ENCODE measurements at regions of chr7 and their contacts with region 1.

Region 1: DNA sequence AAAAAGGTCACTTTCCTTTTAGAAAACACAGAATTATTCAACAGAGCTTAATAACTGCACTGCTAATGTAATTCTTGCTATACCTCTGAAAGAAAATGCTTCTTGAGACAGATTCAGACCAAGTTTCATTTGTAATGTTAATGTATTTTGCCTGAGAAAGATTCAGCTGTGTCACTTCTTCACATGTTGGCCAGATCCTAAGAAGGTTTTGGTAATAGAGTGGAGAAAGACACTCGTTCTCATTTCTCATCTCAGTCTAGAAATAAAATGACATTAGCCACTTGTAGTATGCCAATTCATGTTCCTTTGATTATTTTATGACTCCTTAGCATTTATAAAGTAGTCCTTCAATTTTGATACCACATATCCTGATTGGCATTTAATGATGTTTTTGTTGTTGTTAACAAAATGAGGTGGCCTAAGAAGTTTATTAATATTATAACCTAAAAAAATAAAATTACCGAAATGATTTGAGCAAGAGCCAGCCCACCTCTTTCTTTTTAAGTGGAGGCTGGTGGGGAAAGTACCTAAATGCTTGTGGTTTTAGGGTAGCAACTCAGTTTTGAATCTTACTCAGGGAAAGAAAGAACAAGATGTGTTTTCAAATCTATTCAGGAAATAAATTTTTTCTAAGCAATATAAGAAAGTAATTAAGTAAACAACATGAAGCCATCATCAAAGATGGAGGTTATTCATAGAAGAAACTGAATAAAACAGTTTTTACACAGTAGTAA is 16.4 kb upstream of the ELAPOR2 start:
- DNase-seq: no peak
- H3K4me3 ChIP-seq: no peak overlapping the region
- H3K27ac ChIP-seq: no peak overlapping the region
- H3K4me1 ChIP-seq: no peaks in the 10 kb centered on the region
- H3K27me3 ChIP-seq: no peaks in the 10 kb centered on the region
- CTCF ChIP-seq: no peak
- EP300 ChIP-seq: no peak
- POLR2A ChIP-seq: no peak

Region 2: GRCh38 chr7:87148332-87148955 is 72.6 kb after region 1 on chr7:
- in situ Hi-C with region 1: no loop called
- intact Hi-C with region 1: loop called (anchors 10 kb)
- DNase-seq: no peak
- H3K4me3 ChIP-seq: no peak overlapping the region
- H3K27ac ChIP-seq: no peak overlapping the region
- H3K4me1 ChIP-seq: peaks cover 0 to 22% (median under 1%) of the 10 kb centered on the region in 4 donors
- H3K27me3 ChIP-seq: no peaks in the 10 kb centered on the region
- CTCF ChIP-seq: peak; percentile 39 to 53 (median 45)
- EP300 ChIP-seq: no peak
- POLR2A ChIP-seq: no peak

Measured in transverse colon (tissue), 4 donors.